ENCODE measurements at regions of chr17 and their contacts with region 1.

Region 1: GRCh38 chr17:47720754-47721533 is 12.1 kb upstream of the TBX21 start:
- DNase-seq: peak; percentile 97
- ATAC-seq: peak; percentile 80
- H3K4me3 Mint-ChIP-seq: peak overlapping the region; percentile 69
- H3K27ac Mint-ChIP-seq: peak overlapping the region; percentile 90
- H3K4me1 Mint-ChIP-seq: peaks cover 81% of the 10 kb centered on the region
- H3K27me3 Mint-ChIP-seq: peaks cover 2% of the 10 kb centered on the region

Region 2: GRCh38 chr17:47470836-47471235 is 250.1 kb before region 1 on chr17:
- CTCF ChIA-PET with region 1: no interaction called
- DNase-seq: no peak
- ATAC-seq: no peak
- H3K4me3 Mint-ChIP-seq: no peak overlapping the region
- H3K27ac Mint-ChIP-seq: no peak overlapping the region
- H3K4me1 Mint-ChIP-seq: no peaks in the 10 kb centered on the region
- H3K27me3 Mint-ChIP-seq: no peaks in the 10 kb centered on the region

Region 3: DNA sequence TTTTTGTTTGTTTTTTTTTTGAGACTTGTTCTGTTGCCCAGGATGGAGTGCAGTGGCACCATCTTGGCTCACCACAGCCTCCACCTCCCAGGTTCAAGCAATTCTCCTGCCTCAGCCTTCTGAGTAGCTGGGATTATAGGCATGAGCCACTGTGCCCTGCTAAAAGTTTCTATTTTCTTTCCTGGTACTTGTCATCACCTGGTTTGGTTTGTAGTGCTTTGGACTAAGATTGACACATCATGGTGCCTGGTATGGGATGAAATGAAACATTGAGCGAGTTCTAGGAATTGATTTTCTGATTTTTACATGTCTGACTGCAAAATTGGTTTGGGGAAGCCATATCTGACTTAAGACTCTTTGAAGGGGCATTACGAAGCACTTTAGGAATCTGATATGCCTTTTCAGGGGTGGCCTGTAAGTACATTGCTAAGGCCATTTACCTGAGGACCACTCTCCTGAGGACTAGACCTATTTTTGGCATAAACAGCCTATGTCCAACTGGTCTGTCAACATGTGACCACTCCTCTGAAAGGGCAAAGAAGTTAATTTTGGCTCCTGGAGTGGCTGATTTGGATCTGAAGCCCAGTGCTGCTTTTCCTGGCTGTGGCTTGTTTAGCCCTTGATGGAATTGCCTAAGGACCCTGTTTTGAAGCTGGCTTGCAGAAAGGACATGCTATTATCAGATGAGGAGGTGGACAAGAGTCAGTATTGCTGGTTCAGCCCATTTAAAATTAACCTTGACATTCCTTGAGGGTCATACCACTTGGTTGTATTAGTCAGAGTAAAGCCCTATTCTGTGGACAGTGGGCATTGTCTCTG is 45.4 kb before region 1 on chr17:
- CTCF ChIA-PET with region 1: no interaction called
- DNase-seq: no peak
- ATAC-seq: no peak
- H3K4me3 Mint-ChIP-seq: no peak overlapping the region
- H3K27ac Mint-ChIP-seq: no peak overlapping the region
- H3K4me1 Mint-ChIP-seq: peaks cover 36% of the 10 kb centered on the region
- H3K27me3 Mint-ChIP-seq: no peaks in the 10 kb centered on the region

Region 4: DNA sequence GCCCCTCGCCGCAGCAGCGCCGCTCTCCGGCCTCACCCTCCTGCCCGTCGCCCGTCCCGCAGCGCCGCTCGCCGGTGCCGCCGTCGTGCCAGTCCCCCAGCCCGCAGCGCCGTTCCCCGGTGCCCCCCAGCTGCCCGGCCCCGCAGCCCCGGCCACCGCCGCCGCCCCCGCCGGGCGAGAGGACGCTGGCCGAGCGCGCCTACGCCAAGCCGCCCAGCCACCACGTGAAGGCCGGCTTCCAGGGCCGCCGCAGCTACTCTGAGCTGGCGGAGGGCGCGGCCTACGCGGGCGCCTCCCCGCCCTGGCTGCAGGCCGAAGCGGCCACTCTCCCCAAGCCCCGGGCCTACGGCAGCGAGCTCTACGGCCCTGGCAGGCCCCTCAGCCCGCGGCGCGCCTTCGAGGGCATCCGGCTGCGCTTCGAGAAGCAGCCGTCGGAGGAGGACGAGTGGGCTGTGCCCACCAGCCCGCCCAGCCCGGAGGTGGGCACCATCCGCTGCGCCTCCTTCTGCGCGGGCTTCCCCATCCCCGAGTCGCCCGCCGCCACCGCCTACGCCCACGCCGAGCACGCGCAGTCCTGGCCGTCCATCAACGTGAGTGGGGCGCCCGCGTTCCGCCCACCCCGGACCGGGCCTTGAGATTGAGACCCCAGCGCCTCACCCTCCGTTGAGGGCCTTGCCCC is 11.9 kb before region 1 on chr17:
- CTCF ChIA-PET with region 1: interaction called, 157 read pairs
- DNase-seq: no peak
- ATAC-seq: no peak
- H3K4me3 Mint-ChIP-seq: no peak overlapping the region
- H3K27ac Mint-ChIP-seq: no peak overlapping the region
- H3K4me1 Mint-ChIP-seq: peaks cover 46% of the 10 kb centered on the region
- H3K27me3 Mint-ChIP-seq: peaks cover 7% of the 10 kb centered on the region

Region 5: GRCh38 chr17:47733047-47733673 is 12.2 kb after region 1 on chr17 and contains the start of gene TBX21:
- CTCF ChIA-PET with region 1: interaction called, 50 read pairs
- DNase-seq: peak; percentile 97
- ATAC-seq: peak; percentile 82
- H3K4me3 Mint-ChIP-seq: peak within 1 kb of the TSS; percentile 93
- H3K27ac Mint-ChIP-seq: peak within 1 kb of the TSS; percentile 99
- H3K4me1 Mint-ChIP-seq: peaks cover 67% of the 10 kb centered on the region
- H3K27me3 Mint-ChIP-seq: no peaks in the 10 kb centered on the region
- total RNA-seq, gene TBX21: 59.0 to 68.4 TPM